ENCODE measurements at regions of chr3 and their contacts with region 1.

Region 1: DNA sequence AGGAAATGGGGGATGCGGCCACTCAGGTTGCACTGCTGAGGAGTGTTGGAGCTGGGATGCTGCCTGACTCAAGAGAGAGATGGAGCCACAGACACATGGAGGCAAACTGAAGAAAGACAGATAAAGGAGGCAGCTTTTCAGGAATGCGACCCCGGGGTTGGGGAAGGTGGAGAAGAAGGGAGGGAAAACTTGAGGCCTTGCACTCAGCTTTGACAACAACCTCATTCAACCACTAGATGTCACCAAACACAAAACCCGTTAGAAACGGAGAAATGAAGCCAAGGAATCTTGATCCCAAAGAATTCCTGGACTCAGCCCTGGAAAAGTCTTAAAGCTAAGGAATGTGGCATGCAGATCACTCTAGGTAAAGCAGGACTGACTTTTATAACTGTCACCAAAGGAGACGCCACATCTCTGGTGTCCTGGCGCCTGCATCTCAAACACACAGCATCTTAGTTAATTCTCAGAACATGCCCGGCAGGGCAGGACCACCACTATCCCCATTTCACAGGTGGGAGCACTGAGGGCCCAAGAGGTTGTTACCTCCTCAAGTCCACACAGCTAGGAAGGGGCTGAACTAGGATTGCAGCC is 59.6 kb upstream of the LMCD1 start:
- DNase-seq: peak; percentile 60
- ATAC-seq: 0 out of 3 replicates have a peak, but pooled peaks have one; percentile 4
- H3K4me3 ChIP-seq: no peak overlapping the region
- H3K27ac ChIP-seq: no peak overlapping the region
- H3K4me1 ChIP-seq: peaks cover 57% of the 10 kb centered on the region
- H3K27me3 ChIP-seq: no peaks in the 10 kb centered on the region
- CTCF ChIP-seq: peak; percentile 86
- EP300 ChIP-seq: no peak
- POLR2A ChIP-seq: no peak
- RAD21 ChIP-seq: peak; percentile 88

Region 2: DNA sequence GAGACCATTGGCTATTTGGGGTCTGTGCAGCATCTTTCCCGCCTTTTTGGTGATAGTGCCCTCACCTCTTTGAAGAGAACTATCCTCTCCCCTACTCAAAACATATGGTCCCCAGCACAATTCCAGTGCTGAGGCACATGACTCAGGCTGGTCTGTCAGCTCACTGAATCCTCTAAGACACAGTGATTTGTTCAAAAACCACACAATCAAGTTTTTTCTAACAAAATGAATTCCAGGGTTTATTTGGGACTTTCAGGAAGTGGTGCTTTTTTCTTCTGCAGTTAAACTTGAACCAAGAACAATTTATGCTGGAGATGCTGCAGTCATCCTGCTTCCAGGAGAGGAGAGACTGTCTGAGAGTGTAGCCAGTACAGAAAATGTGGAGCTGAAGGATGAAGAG is 82.9 kb before region 1 on chr3:
- CTCF ChIA-PET with region 1: no interaction called
- POLR2A ChIA-PET with region 1: no interaction called
- in situ Hi-C with region 1: no loop called
- intact Hi-C with region 1: no loop called
- DNase-seq: no peak
- ATAC-seq: no peak
- H3K4me3 ChIP-seq: no peak overlapping the region
- H3K27ac ChIP-seq: no peak overlapping the region
- H3K4me1 ChIP-seq: no peaks in the 10 kb centered on the region
- H3K27me3 ChIP-seq: no peaks in the 10 kb centered on the region; a peak in 1 of 5 replicates
- CTCF ChIP-seq: no peak
- EP300 ChIP-seq: no peak
- POLR2A ChIP-seq: no peak
- RAD21 ChIP-seq: no peak

Region 3: DNA sequence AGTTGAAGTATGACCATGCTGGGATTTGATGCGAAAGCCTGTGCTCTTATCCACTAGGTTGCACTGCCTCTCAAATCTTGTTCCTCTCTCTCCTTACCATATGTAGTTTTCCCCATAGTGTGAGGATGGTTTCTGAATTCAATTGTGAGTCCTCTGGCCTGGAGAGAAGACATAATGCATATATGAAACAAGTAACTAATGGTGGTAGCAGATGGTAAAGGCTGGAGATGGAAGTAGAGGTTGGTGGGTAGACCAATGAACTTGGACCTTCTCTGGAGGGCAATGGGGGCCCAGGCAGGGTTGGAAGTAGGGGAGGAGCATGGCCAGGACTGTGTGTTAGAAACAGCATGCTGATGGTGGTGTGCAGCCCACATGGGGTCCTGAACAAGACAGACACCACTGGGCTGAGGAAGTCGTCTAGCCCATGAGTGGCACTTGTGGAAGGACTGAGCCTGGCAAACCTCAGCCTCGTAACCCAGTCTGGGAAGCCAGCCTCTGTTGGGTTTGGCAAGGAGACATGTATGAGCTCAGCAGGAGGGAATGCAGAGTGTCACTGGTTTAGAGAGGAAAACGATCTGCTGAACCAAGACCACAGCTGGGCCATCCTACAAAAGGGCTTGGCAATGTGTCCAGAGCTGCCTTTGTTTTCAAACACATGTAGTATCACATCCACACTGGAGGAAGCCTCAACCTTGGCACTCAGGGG is 41.0 kb after region 1 on chr3:
- CTCF ChIA-PET with region 1: no interaction called
- POLR2A ChIA-PET with region 1: interaction called, 14 read pairs
- in situ Hi-C with region 1: no loop called
- intact Hi-C with region 1: no loop called
- DNase-seq: peak; percentile 75
- ATAC-seq: peak; percentile 80
- H3K4me3 ChIP-seq: no peak overlapping the region
- H3K27ac ChIP-seq: peak overlapping the region; percentile 33
- H3K4me1 ChIP-seq: peaks cover 69% of the 10 kb centered on the region
- H3K27me3 ChIP-seq: no peaks in the 10 kb centered on the region
- CTCF ChIP-seq: no peak
- EP300 ChIP-seq: no peak
- POLR2A ChIP-seq: no peak
- RAD21 ChIP-seq: no peak

Region 4: GRCh38 chr3:8490079-8490552 is 48.1 kb after region 1 on chr3:
- CTCF ChIA-PET with region 1: no interaction called
- POLR2A ChIA-PET with region 1: interaction called, 6 read pairs
- in situ Hi-C with region 1: no loop called
- intact Hi-C with region 1: loop called (anchors 1 kb)
- DNase-seq: peak; percentile 66
- ATAC-seq: no peak
- H3K4me3 ChIP-seq: no peak overlapping the region
- H3K27ac ChIP-seq: peak overlapping the region; percentile 36
- H3K4me1 ChIP-seq: peaks cover 61% of the 10 kb centered on the region
- H3K27me3 ChIP-seq: no peaks in the 10 kb centered on the region
- CTCF ChIP-seq: no peak
- EP300 ChIP-seq: no peak
- POLR2A ChIP-seq: no peak
- RAD21 ChIP-seq: no peak

Region 5: DNA sequence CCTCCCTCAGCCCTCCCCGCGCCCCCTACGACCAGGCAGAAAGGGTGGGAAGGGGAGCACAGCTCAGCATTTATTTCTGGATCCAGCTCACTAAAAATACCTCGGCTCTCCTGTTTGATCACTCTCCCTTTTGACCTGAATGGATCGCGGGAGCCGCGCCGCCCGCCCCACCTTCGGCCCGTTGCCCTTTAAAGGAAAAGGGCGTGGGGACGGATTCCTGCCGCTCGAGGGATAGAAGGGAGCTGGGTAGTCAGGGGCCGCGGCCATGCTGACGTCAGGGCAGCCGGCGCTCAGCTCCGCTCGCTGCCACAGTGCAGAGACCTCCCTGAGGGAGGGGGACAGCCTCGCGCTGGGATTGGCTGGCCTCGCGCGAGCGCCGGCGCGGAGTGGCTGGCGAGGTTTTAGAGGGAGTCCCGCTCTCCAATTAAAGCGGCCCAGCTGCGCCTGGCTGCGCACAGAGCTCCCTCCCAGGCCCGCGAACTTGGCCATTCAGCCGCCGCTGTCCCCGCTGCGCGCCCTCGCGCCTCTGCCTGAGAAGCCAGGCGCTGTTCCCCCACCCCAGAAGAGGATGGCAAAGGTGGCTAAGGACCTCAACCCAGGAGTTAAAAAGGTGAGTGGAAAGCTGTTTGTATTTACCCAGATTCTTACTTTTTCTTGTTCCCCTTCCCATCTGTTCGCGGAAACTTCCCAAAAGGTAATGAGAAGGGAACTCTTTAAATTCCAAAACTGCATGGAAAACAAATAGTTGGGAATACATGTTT is 59.5 kb after region 1 on chr3 and contains the start of gene LMCD1:
- CTCF ChIA-PET with region 1: no interaction called
- POLR2A ChIA-PET with region 1: interaction called, 42 read pairs
- in situ Hi-C with region 1: loop called (anchors 5 kb)
- intact Hi-C with region 1: loop called (anchors 1 kb)
- DNase-seq: peak; percentile 93
- ATAC-seq: peak; percentile 98
- H3K4me3 ChIP-seq: peak within 1 kb of the TSS; percentile 29 to 61 (median 56)
- H3K27ac ChIP-seq: peak within 1 kb of the TSS; percentile 72
- H3K4me1 ChIP-seq: peaks cover 71% of the 10 kb centered on the region
- H3K27me3 ChIP-seq: no peaks in the 10 kb centered on the region
- CTCF ChIP-seq: peak; percentile 26
- EP300 ChIP-seq: 0 out of 4 replicates have a peak, but pooled peaks of 1 of the 2 experiments have one; percentile 3
- POLR2A ChIP-seq: peak; percentile 38 to 45; a peak in 3 of 4 replicates
- RAD21 ChIP-seq: peak; percentile 43
- total RNA-seq, gene LMCD1: 6.1 and 6.2 TPM in 2 replicates

Region 6: DNA sequence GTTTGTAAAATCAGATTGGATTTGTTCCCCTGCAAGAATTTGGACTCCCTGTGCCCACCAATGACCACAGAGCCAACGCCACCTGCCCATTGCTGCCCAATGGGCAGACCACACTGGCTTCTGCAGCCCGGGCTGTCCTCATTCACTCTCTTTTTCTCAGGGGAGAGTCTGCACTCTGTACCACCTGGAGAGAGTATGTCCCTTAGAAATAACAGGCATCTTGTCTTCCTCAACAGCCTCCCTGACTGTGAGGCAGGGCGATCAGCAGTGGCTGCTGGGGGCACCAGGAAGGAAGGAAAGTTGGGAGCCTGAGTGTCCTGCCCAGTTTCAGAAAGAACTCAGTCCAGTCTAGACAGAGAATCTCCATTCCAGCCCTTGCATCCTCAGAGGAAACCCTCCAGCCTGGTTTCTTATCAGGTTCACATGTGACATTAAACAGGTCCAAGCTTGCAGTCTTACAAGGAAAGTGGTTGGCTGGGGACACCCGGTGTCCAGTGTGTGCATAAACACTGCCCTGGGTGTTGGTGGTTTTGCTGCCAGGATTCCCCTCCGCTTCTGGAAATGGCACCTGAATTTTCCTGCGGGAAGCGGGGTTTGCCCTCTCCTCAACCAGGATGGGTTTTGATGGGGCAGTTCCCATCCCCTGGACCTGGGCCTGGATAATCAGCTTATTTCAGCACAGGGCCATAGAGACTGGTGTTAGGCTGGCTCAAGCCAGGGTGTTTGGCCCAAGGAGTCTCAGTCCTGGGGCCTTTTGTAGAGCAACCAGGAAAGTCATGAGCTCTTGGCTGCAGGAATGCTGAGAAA is 165.4 kb after region 1 on chr3:
- CTCF ChIA-PET with region 1: interaction called, 18 read pairs
- POLR2A ChIA-PET with region 1: no interaction called
- in situ Hi-C with region 1: no loop called
- intact Hi-C with region 1: loop called (anchors 1 kb)
- DNase-seq: peak; percentile 55
- ATAC-seq: peak; percentile 93
- H3K4me3 ChIP-seq: no peak overlapping the region
- H3K27ac ChIP-seq: no peak overlapping the region
- H3K4me1 ChIP-seq: peaks cover 5% of the 10 kb centered on the region; the same call in 1 of the 2 replicates
- H3K27me3 ChIP-seq: no peaks in the 10 kb centered on the region
- CTCF ChIP-seq: peak; percentile 83
- EP300 ChIP-seq: no peak
- POLR2A ChIP-seq: no peak
- RAD21 ChIP-seq: peak; percentile 82

Region 7: GRCh38 chr3:8622873-8623691 is 181.0 kb after region 1 on chr3:
- CTCF ChIA-PET with region 1: interaction called, 46 read pairs
- POLR2A ChIA-PET with region 1: no interaction called
- in situ Hi-C with region 1: loop called (anchors 5 kb)
- intact Hi-C with region 1: no loop called
- DNase-seq: peak; percentile 41
- ATAC-seq: peak; percentile 92
- H3K4me3 ChIP-seq: no peak overlapping the region
- H3K27ac ChIP-seq: no peak overlapping the region
- H3K4me1 ChIP-seq: 0 out of 2 replicates have a peak, but pooled peaks cover 4% of the 10 kb centered on the region
- H3K27me3 ChIP-seq: no peaks in the 10 kb centered on the region
- CTCF ChIP-seq: peak; percentile 94
- EP300 ChIP-seq: no peak
- POLR2A ChIP-seq: no peak
- RAD21 ChIP-seq: peak; percentile 93

Measured in HepG2 (cell line).